ENCODE measurements at regions of chr11 and their contacts with region 1.

Region 1: DNA sequence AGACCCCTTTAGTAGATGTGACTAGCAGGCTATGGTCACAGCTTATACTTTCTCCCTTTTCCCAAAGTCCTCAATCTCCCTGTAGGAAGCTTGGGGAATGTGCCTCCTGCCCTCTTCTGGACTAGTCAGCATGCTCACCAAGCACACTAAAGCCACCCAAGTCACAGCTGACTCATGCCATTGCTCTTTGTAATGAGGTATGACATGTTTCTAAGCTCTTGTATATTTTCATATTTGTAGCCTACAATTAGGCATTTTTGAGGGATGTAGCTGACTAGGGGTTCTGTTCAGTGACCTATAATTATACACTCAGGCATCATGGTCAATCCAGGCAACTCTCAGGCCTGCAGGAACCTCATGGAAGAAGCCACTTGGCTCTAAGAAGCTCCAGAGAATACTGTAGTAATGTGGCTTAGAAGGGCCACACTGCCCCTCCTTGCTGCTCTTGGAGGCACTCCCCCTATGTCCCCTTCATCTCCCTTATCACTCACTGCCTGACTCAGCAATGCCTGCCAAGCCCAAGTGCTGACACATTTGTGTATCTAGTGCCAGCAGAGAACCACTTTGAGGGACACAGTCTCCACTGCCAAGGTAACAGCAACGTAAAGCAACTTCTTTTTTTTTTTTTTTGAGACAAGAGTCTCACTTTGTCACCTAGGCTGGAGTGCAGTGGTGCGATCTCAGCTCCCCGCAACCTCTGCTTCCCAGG is 86.2 kb downstream of the RPL27A start:
- DNase-seq: peak in 4 of 5 donors; percentile 71 to 88 (median 80)
- ATAC-seq: peak; percentile 90 to 94 (median 93)
- H3K4me3 ChIP-seq: no peak overlapping the region
- H3K27ac ChIP-seq: peak overlapping the region; percentile 31 to 86 (median 72)
- H3K4me1 ChIP-seq: peaks cover 8 to 90% (median 44%) of the 10 kb centered on the region in 12 donors
- H3K27me3 ChIP-seq: no peaks in the 10 kb centered on the region
- CTCF ChIP-seq: peak in 6 of 12 donors; percentile 8 to 43 (median 25)
- POLR2A ChIP-seq: no peak

Region 2: DNA sequence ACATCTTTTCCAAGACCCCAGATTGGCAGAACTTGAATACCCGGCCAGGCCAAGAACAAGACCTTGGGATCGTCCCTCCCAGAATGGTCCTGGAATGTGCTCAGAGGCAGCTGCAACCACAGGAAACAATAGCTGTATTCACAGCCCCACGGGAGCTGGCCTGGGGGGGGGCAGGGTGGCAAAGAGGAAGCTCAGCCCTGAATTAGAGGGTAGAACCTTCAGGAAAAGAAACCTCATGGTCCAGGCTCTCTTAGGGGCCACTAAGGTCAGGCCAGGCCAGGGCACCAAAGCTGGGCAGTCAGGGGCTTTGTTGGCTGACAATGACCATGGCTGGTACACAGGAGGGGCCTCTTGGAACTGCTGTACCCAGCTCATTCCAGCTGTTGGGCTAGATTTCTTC is 68.9 kb before region 1 on chr11:
- intact Hi-C with region 1: loop called in 2 of 10 experiments (anchors 5 to 10 kb)
- DNase-seq: peak in 1 of 5 donors; percentile 46
- ATAC-seq: peak in 3 of 4 donors; percentile 6 to 58 (median 17)
- H3K4me3 ChIP-seq: no peak overlapping the region
- H3K27ac ChIP-seq: peak overlapping the region in 11 of 12 donors; percentile 10 to 95 (median 54)
- H3K4me1 ChIP-seq: peaks cover 0 to 24% (median 15%) of the 10 kb centered on the region in 12 donors
- H3K27me3 ChIP-seq: no peaks in the 10 kb centered on the region
- CTCF ChIP-seq: no peak
- POLR2A ChIP-seq: no peak

Region 3: GRCh38 chr11:8841899-8842298 is 73.1 kb after region 1 on chr11:
- intact Hi-C with region 1: no loop called
- DNase-seq: no peak
- ATAC-seq: no peak
- H3K4me3 ChIP-seq: no peak overlapping the region
- H3K27ac ChIP-seq: no peak overlapping the region
- H3K4me1 ChIP-seq: peaks cover 0 to 38% (median 29%) of the 10 kb centered on the region in 12 donors
- H3K27me3 ChIP-seq: no peaks in the 10 kb centered on the region
- CTCF ChIP-seq: no peak
- POLR2A ChIP-seq: no peak